ENCODE measurements at regions of chr16 and their contacts with region 1.

Region 1: DNA sequence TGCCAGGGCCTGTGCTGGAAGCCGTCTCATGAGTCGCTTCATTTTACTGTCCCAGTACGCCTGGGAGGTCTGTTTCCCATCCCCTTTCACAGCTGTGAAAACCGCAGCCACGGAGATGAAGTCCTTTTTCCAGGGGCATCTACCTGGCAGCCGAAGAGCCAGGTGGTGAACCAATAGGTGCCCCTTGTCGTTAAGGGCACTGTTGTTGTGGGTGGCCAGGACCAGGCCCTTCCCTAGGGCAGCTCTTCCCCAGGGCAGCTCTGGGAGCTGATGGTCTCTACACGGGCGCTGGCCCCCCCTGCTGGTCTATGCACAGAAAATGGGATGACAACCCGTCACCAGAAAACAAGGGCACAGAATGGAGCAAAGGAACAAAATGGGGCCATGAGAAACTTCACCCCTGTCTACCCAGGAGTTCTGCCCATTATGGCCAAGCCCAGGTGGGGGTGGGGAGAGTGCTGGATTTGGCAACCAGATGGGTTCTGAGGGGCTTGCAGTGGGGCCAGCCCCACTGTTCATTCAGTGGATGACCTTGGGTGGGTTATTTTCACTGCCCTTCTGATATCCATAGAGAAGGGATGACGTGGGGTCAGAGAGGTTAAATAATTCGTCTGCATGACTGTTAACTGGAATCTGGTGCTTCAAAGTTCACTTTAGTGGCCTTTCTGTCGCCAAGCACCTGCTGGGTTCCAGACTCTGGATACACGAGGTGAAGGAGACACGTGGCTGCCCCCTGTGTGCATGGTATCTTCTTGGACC is 11.5 kb downstream of the RMI2 start:
- DNase-seq: peak; percentile 64 to 89 (median 84)
- ATAC-seq: peak; percentile 61 to 64
- H3K4me3 ChIP-seq: no peak overlapping the region
- H3K27ac ChIP-seq: peak overlapping the region; percentile 79
- H3K4me1 ChIP-seq: peaks cover 6% of the 10 kb centered on the region
- H3K27me3 ChIP-seq: no peaks in the 10 kb centered on the region

Region 2: GRCh38 chr16:10964039-10964890 is 392.5 kb before region 1 on chr16:
- intact Hi-C with region 1: loop called in 1 of 4 experiments (anchors 10 kb)
- DNase-seq: peak; percentile 82 to 93 (median 92)
- ATAC-seq: peak; percentile 86 to 89
- H3K4me3 ChIP-seq: no peak overlapping the region
- H3K27ac ChIP-seq: peak overlapping the region; percentile 13
- H3K4me1 ChIP-seq: peaks cover 3% of the 10 kb centered on the region
- H3K27me3 ChIP-seq: no peaks in the 10 kb centered on the region

Region 3: DNA sequence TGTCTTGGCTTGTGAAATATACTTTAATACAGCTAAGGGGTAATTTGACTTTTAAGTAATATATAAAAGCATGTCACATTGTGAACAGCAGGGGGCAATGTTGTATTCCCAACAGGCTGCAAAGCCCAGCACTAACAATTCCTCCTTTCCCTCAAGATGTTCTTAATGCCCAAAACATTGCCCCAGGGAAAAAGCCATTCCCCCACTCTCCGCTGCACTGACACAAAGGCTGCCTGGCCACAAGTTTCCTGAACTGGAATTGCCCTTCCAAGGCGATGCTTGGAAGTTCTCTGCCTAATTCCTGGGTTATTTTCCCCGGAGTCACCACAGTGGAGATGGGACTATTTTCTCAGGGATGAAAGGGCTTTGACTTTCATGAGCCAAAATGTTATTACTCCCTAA is 385.2 kb before region 1 on chr16:
- intact Hi-C with region 1: loop called in 3 of 4 experiments (anchors 5 to 10 kb)
- DNase-seq: peak in 1 of 3 donors; percentile 32
- ATAC-seq: peak; percentile 61 to 68
- H3K4me3 ChIP-seq: no peak overlapping the region
- H3K27ac ChIP-seq: no peak overlapping the region
- H3K4me1 ChIP-seq: peaks cover 3% of the 10 kb centered on the region
- H3K27me3 ChIP-seq: no peaks in the 10 kb centered on the region

Region 4: GRCh38 chr16:11273721-11274324 is 82.9 kb before region 1 on chr16:
- intact Hi-C with region 1: loop called in 1 of 4 experiments (anchors 10 kb)
- DNase-seq: no peak
- ATAC-seq: no peak
- H3K4me3 ChIP-seq: no peak overlapping the region
- H3K27ac ChIP-seq: no peak overlapping the region
- H3K4me1 ChIP-seq: no peaks in the 10 kb centered on the region
- H3K27me3 ChIP-seq: no peaks in the 10 kb centered on the region

Region 5: DNA sequence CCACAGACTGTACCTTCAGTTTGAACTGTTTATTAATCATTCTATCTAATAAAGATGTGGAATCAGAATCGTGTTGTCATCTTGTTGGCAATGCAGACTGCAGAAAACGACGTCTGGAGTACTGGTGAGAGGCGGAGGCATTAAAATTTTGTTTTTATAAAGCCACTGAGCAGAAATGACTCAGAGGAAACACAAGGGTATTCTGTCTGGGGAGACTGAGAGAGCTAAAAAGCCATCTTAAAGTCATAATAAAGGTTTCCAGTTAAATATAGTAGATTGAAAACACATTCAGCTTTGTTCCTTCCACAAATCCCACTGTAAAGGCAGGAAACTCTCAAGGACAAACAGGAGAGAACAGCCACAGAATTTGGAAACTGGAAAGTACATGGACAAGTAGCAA is 1372.7 kb after region 1 on chr16:
- intact Hi-C with region 1: no loop called
- DNase-seq: no peak
- ATAC-seq: no peak
- H3K4me3 ChIP-seq: no peak overlapping the region
- H3K27ac ChIP-seq: no peak overlapping the region
- H3K4me1 ChIP-seq: no peaks in the 10 kb centered on the region
- H3K27me3 ChIP-seq: no peaks in the 10 kb centered on the region